ENCODE measurements at regions of chr7 and their contacts with region 1.

Region 1: DNA sequence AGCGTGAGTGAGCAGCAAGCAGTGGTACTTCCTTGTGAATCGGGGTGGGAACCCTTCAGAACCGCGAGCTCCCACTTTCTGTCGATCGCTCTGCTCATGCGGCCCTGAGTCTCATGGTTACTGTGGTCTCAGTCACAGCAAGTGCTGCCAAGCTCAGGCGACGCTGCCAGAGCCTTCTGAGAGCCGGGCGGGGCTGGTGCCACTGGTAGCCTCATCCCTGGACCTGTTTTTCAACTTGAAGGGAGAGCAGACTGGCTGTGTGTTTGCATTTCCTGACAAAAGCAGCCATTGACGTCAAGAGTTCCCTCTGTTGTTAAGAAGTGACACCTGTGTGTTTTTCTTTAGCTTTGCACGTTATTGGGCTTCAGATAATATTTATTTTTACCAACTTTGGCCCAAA is 32.9 kb upstream of the BHLHA15 start:
- DNase-seq: peak; percentile 89

Region 2: GRCh38 chr7:98034081-98035035 is 144.0 kb before region 1 on chr7:
- in situ Hi-C with region 1: loop called (anchors 10 kb)
- DNase-seq: peak; percentile 59

Region 3: DNA sequence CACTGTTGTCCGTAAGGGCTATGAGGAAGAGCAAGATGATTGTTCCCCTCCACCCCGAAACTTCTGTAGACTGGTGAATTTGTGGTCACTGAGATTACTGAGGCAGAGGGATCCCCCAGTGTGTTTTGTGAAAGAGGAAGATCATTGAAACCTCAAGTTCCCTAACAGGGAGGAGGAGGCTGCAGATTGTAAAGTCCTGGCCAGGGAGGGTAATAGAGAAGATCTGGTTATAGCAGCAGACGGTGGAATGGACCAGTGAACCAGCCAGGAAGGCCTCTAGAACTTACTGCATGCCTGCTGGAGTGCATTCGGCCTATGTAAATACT is 40.6 kb before region 1 on chr7:
- in situ Hi-C with region 1: no loop called
- DNase-seq: no peak

Region 4: DNA sequence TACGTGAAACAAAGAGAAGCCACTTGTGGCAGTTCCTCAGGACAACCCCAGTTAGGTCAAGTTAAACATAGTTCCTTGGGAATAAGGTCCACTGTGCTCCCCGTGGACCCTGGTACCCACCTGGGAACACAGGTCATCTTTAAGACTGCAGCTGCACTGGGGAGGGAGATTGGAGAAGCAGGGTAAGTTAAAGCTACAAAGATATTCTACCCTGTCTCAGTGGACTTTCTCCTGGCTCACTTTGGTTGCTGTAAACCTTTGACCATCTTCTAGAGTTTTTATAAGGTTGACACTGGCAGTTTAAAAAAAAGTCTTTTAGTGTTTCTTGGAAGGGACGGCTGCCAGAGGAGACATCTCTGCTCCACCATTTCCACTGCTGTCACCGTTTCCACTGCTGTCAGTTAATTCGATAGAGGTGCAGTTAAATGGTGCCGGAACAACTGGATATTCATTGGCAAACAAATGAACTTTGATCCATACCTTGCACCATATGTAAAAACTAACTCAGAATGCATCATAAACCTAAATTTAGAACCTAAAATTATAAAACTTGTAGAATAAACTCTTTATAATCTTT is 29.1 kb before region 1 on chr7:
- in situ Hi-C with region 1: no loop called
- DNase-seq: no peak

Region 5: DNA sequence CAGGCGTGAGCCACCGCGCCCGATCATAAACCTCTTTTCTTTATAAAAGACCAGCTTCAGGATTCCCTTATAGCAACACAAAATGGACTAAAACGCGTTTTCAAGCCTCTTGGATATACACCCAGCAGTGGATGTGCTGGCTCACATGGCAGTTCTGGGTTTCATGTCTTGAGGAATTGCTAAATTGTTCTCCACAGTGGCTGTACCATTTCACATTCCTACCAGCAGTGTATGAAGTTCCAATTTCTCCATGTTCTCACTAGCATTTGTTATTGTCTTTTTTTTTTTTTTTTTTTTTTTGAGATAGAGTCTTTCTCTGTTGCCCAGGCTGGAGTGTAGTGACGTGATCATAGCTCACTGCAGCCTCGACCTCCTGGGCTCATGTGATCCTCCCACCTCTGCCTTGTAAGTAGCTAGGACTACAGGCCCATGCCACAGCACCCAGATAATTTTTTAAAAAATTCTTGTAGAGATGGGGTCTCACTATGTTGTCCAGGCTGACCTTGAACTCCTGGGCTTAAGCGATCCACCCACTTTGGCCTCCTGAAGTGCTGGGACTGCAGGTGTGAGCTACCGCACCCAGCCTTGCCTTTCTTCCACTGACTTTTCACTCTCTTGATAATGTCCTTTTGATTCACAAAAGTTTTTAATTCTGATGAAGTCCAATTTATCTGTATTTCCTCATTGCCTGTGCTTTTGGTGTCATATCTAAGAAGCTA is 56.2 kb after region 1 on chr7:
- in situ Hi-C with region 1: no loop called
- DNase-seq: no peak

Measured in G401 (cell line).